Posterior vena cava (tissue), 2 donors: ENCODE measurements at regions of chr2 and their contacts with region 1.

Region 1: DNA sequence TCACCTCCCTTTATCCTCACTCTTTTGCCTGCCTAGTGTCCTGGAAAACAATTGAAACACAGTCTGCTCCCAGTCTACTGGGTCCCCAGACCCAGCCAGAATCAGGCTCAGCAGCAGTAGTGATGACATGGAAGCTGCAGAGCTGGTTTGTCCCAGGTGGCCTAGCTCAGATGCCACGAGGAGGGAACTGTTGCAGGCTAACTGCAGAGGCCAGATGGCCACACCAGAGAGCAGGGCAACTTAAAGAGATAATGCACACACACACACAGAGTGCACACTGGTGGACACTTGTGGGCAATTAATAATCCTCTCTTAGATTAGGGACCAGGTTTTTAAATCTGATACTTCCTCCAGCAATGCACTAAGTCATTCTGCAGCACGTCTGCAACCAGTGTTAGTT is 42.4 kb downstream of the GYPC start:
- DNase-seq: no peak

Region 2: GRCh38 chr2:124898827-124899226 is 1799.5 kb before region 1 on chr2:
- intact Hi-C with region 1: no loop called
- DNase-seq: no peak

Region 3: DNA sequence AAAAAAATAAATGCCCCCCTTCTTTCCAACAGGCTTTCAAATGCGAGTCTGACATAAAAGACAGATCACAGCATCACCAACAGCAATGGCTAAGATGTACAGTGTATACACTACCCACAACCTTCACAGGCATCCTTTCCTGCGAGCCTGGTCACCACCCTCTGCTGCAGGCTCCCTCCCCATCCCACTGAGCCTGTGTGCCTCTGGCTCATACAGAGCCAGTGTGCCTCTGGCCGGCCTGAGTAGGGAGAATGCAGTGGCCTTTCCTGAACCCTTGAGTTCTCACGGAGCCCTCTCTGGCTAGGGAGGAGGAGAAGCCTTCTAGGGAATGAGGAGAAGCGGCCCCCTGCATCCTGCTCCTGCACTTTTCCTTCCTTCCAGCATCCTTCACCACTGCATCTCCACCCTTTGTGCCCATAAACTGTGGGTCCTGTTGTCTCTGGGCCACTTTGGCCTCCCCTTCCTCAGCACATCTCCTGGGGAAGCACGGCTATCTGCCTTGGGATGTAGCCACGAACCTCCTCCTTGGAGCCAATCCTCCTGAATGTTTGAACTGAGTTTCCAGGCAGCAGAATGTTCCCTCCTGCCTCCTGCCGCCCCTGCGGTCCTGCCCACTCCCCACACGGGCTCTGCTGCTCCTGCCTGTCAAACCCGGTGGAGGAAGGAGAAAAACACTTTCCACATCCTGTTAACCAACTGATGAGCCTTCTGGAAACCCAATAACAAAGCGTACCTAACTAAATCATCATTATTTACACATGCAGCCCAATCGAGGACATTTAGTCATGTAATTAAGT is 19.9 kb before region 1 on chr2:
- intact Hi-C with region 1: loop called in 1 of 2 experiments (anchors 1 kb)
- DNase-seq: peak; percentile 30

Region 4: GRCh38 chr2:127637725-127638252 is 939.4 kb after region 1 on chr2:
- intact Hi-C with region 1: no loop called
- DNase-seq: no peak